GM12878 (cell line): ENCODE measurements at regions of chr1 and their contacts with region 1.

Region 1: GRCh38 chr1:219066631-219067349 is 106.9 kb upstream of the LYPLAL1 start:
- DNase-seq: no peak
- ATAC-seq: peak; percentile 75
- H3K4me3 ChIP-seq: no peak overlapping the region
- H3K27ac ChIP-seq: no peak overlapping the region
- H3K4me1 ChIP-seq: no peaks in the 10 kb centered on the region
- H3K27me3 ChIP-seq: no peaks in the 10 kb centered on the region
- CTCF ChIP-seq: peak; percentile 6 to 25 (median 18); a peak in 2 of 6 replicates
- EP300 ChIP-seq: no peak
- POLR2A ChIP-seq: no peak
- RAD21 ChIP-seq: peak; percentile 52

Region 2: GRCh38 chr1:218330043-218330623 is 736.7 kb before region 1 on chr1:
- CTCF ChIA-PET with region 1: no interaction called
- POLR2A ChIA-PET with region 1: no interaction called
- RAD21 ChIA-PET with region 1: no interaction called
- SMC1A ChIA-PET with region 1: no interaction called
- in situ Hi-C with region 1: no loop called
- intact Hi-C with region 1: loop called (anchors 10 kb)
- DNase-seq: no peak
- ATAC-seq: peak; percentile 76
- H3K4me3 ChIP-seq: no peak overlapping the region
- H3K27ac ChIP-seq: no peak overlapping the region
- H3K4me1 ChIP-seq: no peaks in the 10 kb centered on the region
- H3K27me3 ChIP-seq: no peaks in the 10 kb centered on the region
- CTCF ChIP-seq: peak; percentile 36 to 69 (median 39); a peak in 5 of 6 replicates
- EP300 ChIP-seq: no peak
- POLR2A ChIP-seq: no peak
- RAD21 ChIP-seq: peak; percentile 71

Region 3: DNA sequence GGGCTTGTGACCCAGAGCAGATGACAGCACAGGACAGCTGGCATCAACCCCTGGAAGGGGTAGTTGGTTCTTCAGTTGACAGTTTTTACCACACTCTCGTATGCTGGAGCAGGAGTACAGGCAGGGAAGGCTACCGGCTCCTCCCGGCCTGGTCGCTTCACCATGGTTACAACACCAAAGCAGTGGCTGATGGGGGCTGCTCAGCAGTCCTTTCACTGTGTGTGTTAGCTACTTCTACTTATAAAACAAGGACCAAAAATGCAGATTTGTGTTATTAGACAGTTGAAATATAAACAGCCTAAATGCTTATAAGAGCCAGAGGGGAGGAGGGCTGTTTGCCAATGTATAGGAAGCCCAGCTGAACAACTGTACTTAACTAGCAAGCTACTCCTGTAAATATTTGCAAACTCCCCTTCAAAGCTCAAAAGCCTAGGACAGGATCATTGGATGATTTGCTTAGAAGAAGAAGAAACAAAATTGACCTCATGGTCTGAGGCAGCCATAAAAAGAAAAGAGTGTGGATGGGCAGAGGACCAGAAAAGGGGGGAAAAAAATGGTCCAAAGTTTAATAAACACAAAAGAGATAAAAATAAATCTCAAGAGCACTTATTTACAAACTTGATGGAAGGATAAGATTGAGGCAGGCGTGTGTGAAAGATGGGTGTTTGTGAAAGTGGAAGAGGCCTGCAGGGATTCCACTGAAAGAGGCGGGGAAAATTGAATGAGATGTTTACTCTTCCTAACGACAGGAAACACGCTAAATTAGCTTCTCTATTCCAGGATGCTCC is 664.6 kb before region 1 on chr1:
- CTCF ChIA-PET with region 1: no interaction called
- POLR2A ChIA-PET with region 1: interaction called, 12 read pairs
- RAD21 ChIA-PET with region 1: no interaction called
- SMC1A ChIA-PET with region 1: no interaction called
- in situ Hi-C with region 1: no loop called
- intact Hi-C with region 1: no loop called
- DNase-seq: no peak
- ATAC-seq: no peak
- H3K4me3 ChIP-seq: no peak overlapping the region
- H3K27ac ChIP-seq: no peak overlapping the region
- H3K4me1 ChIP-seq: no peaks in the 10 kb centered on the region
- H3K27me3 ChIP-seq: no peaks in the 10 kb centered on the region
- CTCF ChIP-seq: no peak
- EP300 ChIP-seq: no peak
- POLR2A ChIP-seq: no peak
- RAD21 ChIP-seq: no peak

Region 4: GRCh38 chr1:219109424-219110018 is 42.7 kb after region 1 on chr1:
- CTCF ChIA-PET with region 1: no interaction called
- POLR2A ChIA-PET with region 1: no interaction called
- RAD21 ChIA-PET with region 1: no interaction called
- SMC1A ChIA-PET with region 1: no interaction called
- in situ Hi-C with region 1: no loop called
- intact Hi-C with region 1: loop called (anchors 1 kb)
- DNase-seq: no peak
- ATAC-seq: peak; percentile 49
- H3K4me3 ChIP-seq: no peak overlapping the region
- H3K27ac ChIP-seq: no peak overlapping the region
- H3K4me1 ChIP-seq: no peaks in the 10 kb centered on the region
- H3K27me3 ChIP-seq: 0 out of 4 replicates have a peak, but pooled peaks cover 0 to 1% of the 10 kb centered on the region in 2 experiments
- CTCF ChIP-seq: no peak
- EP300 ChIP-seq: no peak
- POLR2A ChIP-seq: no peak
- RAD21 ChIP-seq: no peak